MCF 10A (cell line): ENCODE measurements at regions of chr7 and their contacts with region 1.

Region 1: GRCh38 chr7:37833107-37833817 is 15.1 kb upstream of the NME8 start:
- DNase-seq: peak; percentile 72
- H3K4me3 Mint-ChIP-seq: peak overlapping the region; percentile 53
- H3K27ac Mint-ChIP-seq: no peak overlapping the region
- H3K4me1 Mint-ChIP-seq: peaks cover 13% of the 10 kb centered on the region
- H3K27me3 Mint-ChIP-seq: no peaks in the 10 kb centered on the region
- CTCF ChIP-seq: peak; percentile 56

Region 2: DNA sequence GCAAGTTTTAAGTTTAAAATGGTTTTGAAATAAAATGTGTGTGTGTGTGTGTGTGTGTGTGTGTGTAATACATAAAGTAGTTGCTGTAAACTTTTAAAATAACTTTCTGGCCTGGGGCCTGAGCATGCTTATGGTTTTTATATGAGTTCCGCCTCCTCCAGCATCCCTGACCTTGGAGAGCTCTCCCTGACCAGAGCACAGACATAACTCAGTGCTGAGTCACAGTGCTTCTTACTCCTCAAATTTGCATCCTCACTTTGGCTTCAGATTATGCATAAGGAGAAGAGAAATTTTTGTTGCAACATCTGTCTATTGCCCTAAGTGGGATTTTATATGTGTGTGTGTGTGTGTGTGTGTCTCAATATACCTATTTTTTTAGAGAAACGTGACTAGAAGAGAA is 585.4 kb before region 1 on chr7:
- CTCF ChIA-PET with region 1: interaction called, 13 read pairs
- POLR2A ChIA-PET with region 1: no interaction called
- intact Hi-C with region 1: no loop called
- DNase-seq: peak; percentile 69
- H3K4me3 Mint-ChIP-seq: no peak overlapping the region
- H3K27ac Mint-ChIP-seq: no peak overlapping the region
- H3K4me1 Mint-ChIP-seq: peaks cover 10% of the 10 kb centered on the region
- H3K27me3 Mint-ChIP-seq: no peaks in the 10 kb centered on the region
- CTCF ChIP-seq: no peak

Region 3: DNA sequence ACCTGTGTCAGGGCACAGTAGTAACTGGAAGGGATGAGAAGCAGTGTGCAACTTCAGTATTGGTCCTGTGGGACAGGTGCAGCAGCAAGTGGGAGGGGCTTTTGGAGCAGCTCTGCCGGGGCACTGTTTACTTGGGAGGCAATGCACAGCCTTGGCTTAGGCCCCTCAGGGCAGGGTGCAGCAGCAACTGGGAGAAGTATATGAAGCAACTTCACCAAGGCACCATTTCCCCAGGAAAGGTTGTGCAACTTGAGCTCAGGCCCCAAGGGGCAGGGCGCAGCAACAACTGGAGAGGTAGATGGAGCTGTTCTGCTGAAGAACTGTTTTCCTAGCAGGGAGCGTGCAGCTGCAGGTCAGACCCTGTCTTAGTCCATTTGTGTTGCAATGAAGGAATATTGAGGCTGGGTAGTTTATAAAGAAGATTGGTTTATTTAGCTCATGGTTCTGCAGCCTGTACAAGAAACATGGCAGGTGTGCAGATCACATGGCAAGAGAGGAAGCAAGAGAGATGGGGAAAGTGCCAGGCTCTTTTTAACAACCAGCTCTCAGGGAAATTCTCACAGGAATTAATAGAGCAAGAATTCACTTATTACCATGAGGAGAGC is 139.0 kb before region 1 on chr7:
- CTCF ChIA-PET with region 1: interaction called, 57 read pairs
- POLR2A ChIA-PET with region 1: interaction called, 15 read pairs
- intact Hi-C with region 1: loop called (anchors 2 kb)
- DNase-seq: peak; percentile 97
- H3K4me3 Mint-ChIP-seq: no peak overlapping the region
- H3K27ac Mint-ChIP-seq: peak overlapping the region; percentile 28
- H3K4me1 Mint-ChIP-seq: peaks cover 24% of the 10 kb centered on the region
- H3K27me3 Mint-ChIP-seq: no peaks in the 10 kb centered on the region
- CTCF ChIP-seq: no peak

Region 4: GRCh38 chr7:37815671-37816371 is 17.4 kb before region 1 on chr7:
- CTCF ChIA-PET with region 1: interaction called, 15 read pairs
- POLR2A ChIA-PET with region 1: interaction called, 4 read pairs
- intact Hi-C with region 1: no loop called
- DNase-seq: no peak
- H3K4me3 Mint-ChIP-seq: no peak overlapping the region
- H3K27ac Mint-ChIP-seq: no peak overlapping the region
- H3K4me1 Mint-ChIP-seq: peaks cover 13% of the 10 kb centered on the region
- H3K27me3 Mint-ChIP-seq: no peaks in the 10 kb centered on the region
- CTCF ChIP-seq: no peak

Region 5: GRCh38 chr7:37853474-37853873 is 20.2 kb after region 1 on chr7:
- CTCF ChIA-PET with region 1: interaction called, 13 read pairs
- POLR2A ChIA-PET with region 1: no interaction called
- intact Hi-C with region 1: no loop called
- DNase-seq: peak; percentile 44
- H3K4me3 Mint-ChIP-seq: no peak overlapping the region
- H3K27ac Mint-ChIP-seq: no peak overlapping the region
- H3K4me1 Mint-ChIP-seq: no peaks in the 10 kb centered on the region
- H3K27me3 Mint-ChIP-seq: peaks cover 22% of the 10 kb centered on the region
- CTCF ChIP-seq: peak; percentile 62